ENCODE measurements at regions of chr1 and their contacts with region 1.

Region 1: GRCh38 chr1:36397378-36398230 is at the start of gene LSM10:
- DNase-seq: peak; percentile 44
- H3K4me3 ChIP-seq: peak within 1 kb of the TSS; percentile 85
- CTCF ChIP-seq: no peak

Region 2: DNA sequence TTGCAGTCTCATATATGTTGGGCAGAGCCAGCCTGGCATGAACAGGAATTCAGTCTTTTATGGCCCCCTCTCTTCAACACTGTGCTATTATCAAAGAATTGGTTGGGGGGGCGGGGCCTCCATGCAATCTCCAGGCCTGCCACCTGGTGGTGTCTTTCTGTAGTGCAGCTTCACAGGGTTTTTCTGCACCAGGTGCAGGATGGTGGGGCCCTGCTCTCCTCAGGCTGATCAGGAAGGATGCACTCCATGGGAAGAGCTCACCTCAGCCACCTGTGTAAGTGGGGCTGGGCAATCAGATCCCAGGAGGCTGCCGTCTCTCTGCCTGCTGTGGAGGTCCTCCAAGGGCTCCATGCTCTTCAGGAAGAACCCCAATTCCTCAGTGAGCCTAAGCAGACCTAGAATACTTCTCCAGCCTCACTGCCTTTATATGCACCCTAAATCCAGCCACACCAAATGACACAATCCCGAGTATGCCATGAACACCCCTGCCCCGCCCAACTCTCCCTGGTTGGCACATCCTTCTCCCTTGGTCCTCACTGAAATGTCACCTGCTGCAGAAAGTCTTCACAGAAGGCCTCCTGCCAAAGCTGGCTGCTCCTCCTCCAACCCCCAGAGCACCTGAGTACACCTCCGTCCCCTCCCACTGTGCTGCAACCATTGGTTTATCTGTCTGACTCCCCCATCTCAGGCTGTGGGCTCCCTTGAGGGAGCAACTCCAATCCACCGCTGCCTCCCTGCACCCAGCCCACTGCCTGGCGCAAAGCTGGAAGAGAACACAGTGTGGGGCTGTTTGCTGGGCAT is 28.3 kb before region 1 on chr1:
- CTCF ChIA-PET with region 1: interaction called, 19 read pairs
- POLR2A ChIA-PET with region 1: interaction called, 3 read pairs
- DNase-seq: no peak
- H3K4me3 ChIP-seq: no peak overlapping the region
- CTCF ChIP-seq: peak; percentile 92

Region 3: GRCh38 chr1:36411674-36412520 is 14.3 kb after region 1 on chr1:
- CTCF ChIA-PET with region 1: interaction called, 13 read pairs
- POLR2A ChIA-PET with region 1: no interaction called
- DNase-seq: no peak
- H3K4me3 ChIP-seq: no peak overlapping the region
- CTCF ChIP-seq: no peak

Measured in AG04449 (cell line).